ENCODE measurements at regions of chr9 and their contacts with region 1.

Region 1: GRCh38 chr9:112379177-112380101 is 469 bp upstream of the HSDL2 start:
- DNase-seq: peak; percentile 100
- ATAC-seq: peak; percentile 97
- H3K4me3 Mint-ChIP-seq: peak overlapping the region; percentile 90
- H3K27ac Mint-ChIP-seq: peak overlapping the region; percentile 99
- H3K4me1 Mint-ChIP-seq: peaks cover 29% of the 10 kb centered on the region
- H3K27me3 Mint-ChIP-seq: no peaks in the 10 kb centered on the region
- CTCF ChIP-seq: no peak

Region 2: DNA sequence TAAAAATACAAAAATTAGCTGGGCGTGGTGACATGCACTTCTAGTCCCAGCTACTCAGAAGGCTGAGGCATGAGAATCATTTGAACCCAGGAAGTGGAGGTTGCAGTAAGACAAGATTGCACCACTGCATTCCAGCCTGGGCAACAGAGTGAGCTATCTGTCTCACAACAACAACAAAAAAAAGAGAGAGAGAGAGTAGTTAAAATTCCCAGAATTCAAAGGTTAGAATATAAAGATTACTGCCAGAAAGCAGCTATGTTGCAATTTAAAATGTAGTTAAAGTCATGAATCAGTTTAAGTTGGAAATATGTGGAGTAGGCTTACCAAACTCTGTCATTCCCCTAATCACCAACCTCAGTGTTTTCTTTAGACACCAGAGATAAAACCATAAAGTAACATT is 145.7 kb before region 1 on chr9:
- CTCF ChIA-PET with region 1: no interaction called
- POLR2A ChIA-PET with region 1: no interaction called
- DNase-seq: no peak
- ATAC-seq: no peak
- H3K4me3 Mint-ChIP-seq: no peak overlapping the region
- H3K27ac Mint-ChIP-seq: no peak overlapping the region
- H3K4me1 Mint-ChIP-seq: peaks cover 7% of the 10 kb centered on the region; the same call in 1 of the 2 replicates
- H3K27me3 Mint-ChIP-seq: no peaks in the 10 kb centered on the region
- CTCF ChIP-seq: no peak

Region 3: DNA sequence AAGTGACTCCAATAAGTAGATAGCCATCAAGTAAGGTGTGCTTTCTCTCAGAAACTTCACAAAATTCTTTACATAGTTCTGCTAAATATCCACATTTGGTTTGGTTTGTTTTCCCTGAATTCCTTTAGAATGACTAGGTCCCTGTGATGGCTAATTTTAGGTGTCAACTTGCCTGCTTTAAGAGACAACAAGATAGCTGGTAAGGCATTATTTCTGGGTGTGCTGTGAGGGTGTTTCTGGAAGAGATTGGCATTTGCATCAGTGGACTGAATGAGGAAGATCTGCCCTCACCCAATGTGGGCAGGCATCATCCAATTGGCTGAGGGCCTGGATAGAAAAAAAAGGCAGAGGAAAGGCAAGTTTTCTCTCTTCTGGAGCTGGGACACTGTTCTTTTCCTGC is 37.7 kb before region 1 on chr9:
- CTCF ChIA-PET with region 1: no interaction called
- POLR2A ChIA-PET with region 1: no interaction called
- DNase-seq: no peak
- ATAC-seq: peak; percentile 44; the same call in 1 of the 2 replicates
- H3K4me3 Mint-ChIP-seq: no peak overlapping the region
- H3K27ac Mint-ChIP-seq: peak overlapping the region; percentile 81
- H3K4me1 Mint-ChIP-seq: peaks cover 8% of the 10 kb centered on the region
- H3K27me3 Mint-ChIP-seq: no peaks in the 10 kb centered on the region; the same call in 1 of the 2 replicates
- CTCF ChIP-seq: no peak

Region 4: DNA sequence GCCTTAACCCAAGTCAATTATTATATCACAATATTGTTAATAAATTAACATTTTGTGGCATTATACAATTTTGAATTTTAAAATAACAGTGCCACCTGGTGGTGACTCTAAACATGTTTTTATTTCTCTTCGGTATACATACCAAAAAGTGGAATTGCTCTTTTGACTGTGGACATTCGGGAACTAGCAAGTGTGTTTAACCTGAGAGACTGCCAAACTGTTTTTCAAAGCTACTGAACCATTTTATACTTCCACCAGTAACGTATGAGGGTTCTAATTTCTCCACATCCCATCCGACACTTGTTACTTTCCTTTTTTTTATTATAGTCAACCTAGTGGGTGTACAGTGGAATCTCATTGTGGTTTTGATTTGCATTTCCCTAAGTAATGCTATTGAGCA is 17.8 kb before region 1 on chr9:
- CTCF ChIA-PET with region 1: interaction called, 30 read pairs
- POLR2A ChIA-PET with region 1: interaction called, 9 read pairs
- DNase-seq: no peak
- ATAC-seq: no peak
- H3K4me3 Mint-ChIP-seq: no peak overlapping the region
- H3K27ac Mint-ChIP-seq: no peak overlapping the region
- H3K4me1 Mint-ChIP-seq: no peaks in the 10 kb centered on the region
- H3K27me3 Mint-ChIP-seq: no peaks in the 10 kb centered on the region
- CTCF ChIP-seq: peak; percentile 43